ENCODE measurements at regions of chr17 and their contacts with region 1.

Region 1: DNA sequence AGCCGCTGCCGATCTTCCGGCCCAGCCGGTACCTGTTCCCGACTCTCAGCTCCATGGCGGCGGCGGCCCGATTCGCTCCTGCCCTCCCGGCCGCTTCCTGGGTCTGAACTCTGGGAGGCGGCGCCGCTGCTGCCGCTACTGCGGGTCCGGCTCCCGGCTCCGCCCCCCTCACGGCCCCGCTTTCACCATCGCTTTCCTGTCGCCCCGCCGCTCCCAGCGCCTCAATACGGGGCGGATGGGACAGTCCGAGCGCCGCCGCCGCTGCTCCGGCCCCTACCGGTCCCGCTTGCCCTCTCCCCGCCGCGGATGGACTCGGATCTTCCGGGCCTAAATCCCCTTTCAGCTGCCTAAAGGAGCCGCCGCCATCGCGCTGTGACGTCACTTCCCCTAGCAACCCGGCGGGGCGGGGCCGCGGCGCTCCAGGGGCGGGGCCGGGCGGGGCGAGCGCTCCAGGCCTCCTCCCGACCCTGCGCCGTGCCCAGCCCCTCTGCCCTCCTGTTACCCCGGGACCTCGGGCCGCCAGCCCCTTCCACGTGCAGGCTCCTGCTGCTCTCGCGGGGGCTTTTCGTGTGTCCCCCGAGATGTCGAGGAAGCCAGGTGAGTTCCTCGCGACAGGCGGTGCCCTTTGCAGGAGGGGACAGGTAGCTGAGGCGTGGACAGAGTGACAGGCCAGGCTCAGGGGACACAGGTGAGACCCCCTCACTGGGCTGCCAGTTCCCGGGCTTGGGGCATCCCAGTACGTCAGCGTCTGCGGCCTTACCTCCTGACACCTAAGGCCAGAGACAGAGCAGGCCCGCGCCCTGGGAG is at the start of gene CSNK1D:
- DNase-seq: peak; percentile 85
- H3K4me3 Mint-ChIP-seq: peak within 1 kb of the TSS; percentile 94
- H3K27ac Mint-ChIP-seq: peak within 1 kb of the TSS; percentile 99
- H3K4me1 Mint-ChIP-seq: peaks cover 39% of the 10 kb centered on the region
- H3K27me3 Mint-ChIP-seq: peaks cover 2% of the 10 kb centered on the region
- total RNA-seq, gene CSNK1D: 154 and 161 TPM in 2 replicates

Region 2: GRCh38 chr17:82236142-82236981 is 37.2 kb before region 1 on chr17:
- intact Hi-C with region 1: loop called (anchors 5 kb)
- DNase-seq: peak; percentile 60
- H3K4me3 Mint-ChIP-seq: no peak overlapping the region
- H3K27ac Mint-ChIP-seq: no peak overlapping the region
- H3K4me1 Mint-ChIP-seq: peaks cover 30% of the 10 kb centered on the region
- H3K27me3 Mint-ChIP-seq: no peaks in the 10 kb centered on the region

Region 3: GRCh38 chr17:82292251-82293154 is 19.0 kb after region 1 on chr17:
- intact Hi-C with region 1: loop called (anchors 1 kb)
- DNase-seq: peak; percentile 92
- H3K4me3 Mint-ChIP-seq: peak overlapping the region; percentile 90
- H3K27ac Mint-ChIP-seq: peak overlapping the region; percentile 93
- H3K4me1 Mint-ChIP-seq: peaks cover 48% of the 10 kb centered on the region
- H3K27me3 Mint-ChIP-seq: peaks cover 2% of the 10 kb centered on the region

Region 4: GRCh38 chr17:82297714-82298537 is 24.4 kb after region 1 on chr17:
- intact Hi-C with region 1: loop called (anchors 1 kb)
- DNase-seq: peak; percentile 91
- H3K4me3 Mint-ChIP-seq: peak overlapping the region; percentile 89
- H3K27ac Mint-ChIP-seq: peak overlapping the region; percentile 98
- H3K4me1 Mint-ChIP-seq: peaks cover 85% of the 10 kb centered on the region
- H3K27me3 Mint-ChIP-seq: no peaks in the 10 kb centered on the region

Region 5: DNA sequence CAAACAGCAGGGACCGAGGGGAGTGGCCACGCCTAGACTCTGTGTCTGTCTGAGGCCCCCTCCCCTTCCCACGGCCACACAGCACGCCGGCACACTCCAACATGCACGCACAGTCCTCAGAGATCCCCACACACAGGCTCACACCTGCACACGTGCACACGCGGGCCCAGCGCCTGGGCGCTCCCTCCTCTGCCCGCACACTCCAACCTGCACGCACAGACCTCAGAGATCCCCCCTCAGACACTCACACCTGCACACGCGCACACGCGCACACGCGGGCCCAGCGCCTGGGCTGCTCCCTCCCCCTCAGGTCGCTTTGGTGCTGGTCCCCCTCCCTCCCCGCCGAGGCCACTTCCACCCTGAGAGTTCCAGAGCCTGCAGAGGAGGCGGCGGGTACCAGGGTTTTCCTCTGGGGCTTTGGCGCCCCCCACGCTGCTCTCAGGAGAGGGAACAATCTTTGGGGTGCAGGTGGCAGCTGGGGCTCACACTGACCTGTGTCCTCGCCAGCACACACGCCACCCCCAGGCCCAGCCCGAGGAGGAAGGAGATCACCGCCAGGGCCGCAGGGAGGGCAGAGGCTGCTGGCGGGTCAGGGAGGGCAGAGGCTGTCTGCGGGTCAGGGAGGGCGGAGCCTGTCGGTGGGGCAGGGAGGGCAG is 42.3 kb after region 1 on chr17:
- intact Hi-C with region 1: loop called (anchors 1 kb)
- DNase-seq: peak; percentile 31
- H3K4me3 Mint-ChIP-seq: peak overlapping the region; percentile 97
- H3K27ac Mint-ChIP-seq: no peak overlapping the region
- H3K4me1 Mint-ChIP-seq: peaks cover 5% of the 10 kb centered on the region
- H3K27me3 Mint-ChIP-seq: no peaks in the 10 kb centered on the region

Region 6: DNA sequence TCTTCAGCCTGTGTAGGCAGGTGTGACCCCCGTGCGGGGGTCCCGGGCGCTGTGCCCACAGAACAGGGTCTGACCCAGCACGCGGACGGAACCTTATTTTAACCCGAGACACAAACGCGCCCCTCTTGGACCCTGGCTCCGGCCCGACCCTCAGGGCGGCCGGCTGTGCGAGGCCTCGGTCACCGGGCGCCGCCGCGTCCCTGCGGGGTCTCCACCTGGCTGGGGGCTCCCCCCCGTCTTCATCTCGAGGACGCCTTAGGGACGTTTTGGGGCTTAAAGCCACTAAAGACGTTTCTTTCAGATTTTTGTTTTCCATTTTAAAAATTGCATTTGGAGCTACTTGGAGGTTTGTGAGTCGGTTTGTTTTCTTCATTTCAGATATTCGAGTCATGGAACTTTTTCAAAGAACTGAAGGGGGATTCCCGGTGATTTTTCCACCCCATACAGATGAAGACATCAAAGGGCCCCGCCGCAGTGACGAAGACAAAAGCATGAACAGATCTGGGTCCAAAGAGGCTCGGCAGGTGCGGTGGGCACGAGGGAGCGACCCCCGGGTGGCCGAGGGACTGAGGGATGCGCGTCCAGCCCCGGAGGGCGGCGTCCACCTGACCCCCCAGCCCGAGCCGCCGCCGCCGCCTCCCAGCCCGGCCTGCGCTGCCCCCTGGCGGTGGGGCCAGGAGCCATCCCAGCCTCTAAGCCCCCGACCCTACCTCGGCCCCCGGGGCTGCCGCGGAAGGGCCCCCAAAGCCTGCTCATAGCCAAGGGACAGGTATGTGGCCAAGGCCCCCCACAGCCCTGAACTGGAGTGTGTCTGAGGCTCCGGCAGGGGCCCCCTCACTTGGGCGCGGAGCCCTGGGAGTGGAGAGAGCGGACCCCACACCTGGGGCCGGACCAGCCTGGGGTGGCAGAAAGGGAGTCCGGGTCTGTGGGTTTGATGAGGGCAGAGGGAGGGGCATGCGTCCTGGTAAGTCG is 47.7 kb after region 1 on chr17:
- intact Hi-C with region 1: loop called (anchors 1 kb)
- DNase-seq: peak; percentile 71
- H3K4me3 Mint-ChIP-seq: peak overlapping the region; percentile 94
- H3K27ac Mint-ChIP-seq: peak overlapping the region; percentile 99
- H3K4me1 Mint-ChIP-seq: peaks cover 18% of the 10 kb centered on the region
- H3K27me3 Mint-ChIP-seq: no peaks in the 10 kb centered on the region

Region 7: DNA sequence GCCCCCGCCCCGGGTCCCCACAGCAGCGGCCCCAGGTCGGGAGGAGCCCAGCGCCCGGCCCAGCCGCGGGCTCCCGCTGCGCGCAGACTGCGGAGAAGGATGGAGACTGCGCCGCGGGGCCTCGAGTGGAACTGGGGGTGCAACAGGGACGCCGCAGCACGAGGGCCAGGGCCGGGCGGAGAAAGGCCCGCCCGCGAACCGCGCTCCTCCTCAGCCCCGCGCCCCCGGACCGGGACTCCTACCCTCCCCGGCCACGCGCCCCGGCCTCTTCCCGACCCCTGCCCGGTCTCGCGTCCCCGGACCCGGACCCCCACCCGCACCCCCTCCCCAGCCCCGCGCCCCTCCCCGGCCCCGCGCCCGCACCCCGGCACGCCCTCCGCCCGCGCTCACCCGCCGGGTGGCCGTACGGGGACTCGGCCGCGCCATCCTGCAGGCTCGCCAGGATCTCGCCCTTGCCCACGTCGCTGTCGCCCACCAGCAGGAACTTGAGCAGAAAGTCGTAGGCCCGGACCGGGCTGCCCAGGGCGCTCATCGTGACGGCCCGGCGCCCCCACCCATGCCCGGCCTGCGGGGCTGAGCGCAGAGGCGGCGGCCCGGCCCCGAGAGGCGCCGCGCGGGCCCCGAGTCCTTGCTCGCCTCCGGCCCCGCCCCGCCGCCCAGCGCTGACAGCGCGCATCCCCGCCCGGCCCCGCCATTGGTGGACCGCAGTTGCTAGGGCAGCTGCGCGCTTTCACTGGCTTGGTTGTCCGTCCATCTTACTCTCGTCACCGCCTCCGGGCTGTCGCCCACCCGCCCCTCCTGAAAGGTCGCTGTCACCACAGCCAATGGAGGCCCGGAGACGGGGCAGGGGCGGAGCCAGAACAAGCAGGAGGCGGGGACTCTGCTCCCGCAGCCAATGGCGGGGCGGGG is 424.8 kb after region 1 on chr17 and contains the start of gene RAB40B:
- intact Hi-C with region 1: loop called (anchors 1 kb)
- DNase-seq: peak; percentile 98
- H3K4me3 Mint-ChIP-seq: peak within 1 kb of the TSS; percentile 83
- H3K27ac Mint-ChIP-seq: no peak within 1 kb of the TSS
- H3K4me1 Mint-ChIP-seq: no peaks in the 10 kb centered on the region
- H3K27me3 Mint-ChIP-seq: peaks cover 10% of the 10 kb centered on the region
- total RNA-seq, gene RAB40B: 3.6 and 5.2 TPM in 2 replicates